Vagina (tissue), 2 donors: ENCODE measurements at regions of chr4 and their contacts with region 1.

Region 1: DNA sequence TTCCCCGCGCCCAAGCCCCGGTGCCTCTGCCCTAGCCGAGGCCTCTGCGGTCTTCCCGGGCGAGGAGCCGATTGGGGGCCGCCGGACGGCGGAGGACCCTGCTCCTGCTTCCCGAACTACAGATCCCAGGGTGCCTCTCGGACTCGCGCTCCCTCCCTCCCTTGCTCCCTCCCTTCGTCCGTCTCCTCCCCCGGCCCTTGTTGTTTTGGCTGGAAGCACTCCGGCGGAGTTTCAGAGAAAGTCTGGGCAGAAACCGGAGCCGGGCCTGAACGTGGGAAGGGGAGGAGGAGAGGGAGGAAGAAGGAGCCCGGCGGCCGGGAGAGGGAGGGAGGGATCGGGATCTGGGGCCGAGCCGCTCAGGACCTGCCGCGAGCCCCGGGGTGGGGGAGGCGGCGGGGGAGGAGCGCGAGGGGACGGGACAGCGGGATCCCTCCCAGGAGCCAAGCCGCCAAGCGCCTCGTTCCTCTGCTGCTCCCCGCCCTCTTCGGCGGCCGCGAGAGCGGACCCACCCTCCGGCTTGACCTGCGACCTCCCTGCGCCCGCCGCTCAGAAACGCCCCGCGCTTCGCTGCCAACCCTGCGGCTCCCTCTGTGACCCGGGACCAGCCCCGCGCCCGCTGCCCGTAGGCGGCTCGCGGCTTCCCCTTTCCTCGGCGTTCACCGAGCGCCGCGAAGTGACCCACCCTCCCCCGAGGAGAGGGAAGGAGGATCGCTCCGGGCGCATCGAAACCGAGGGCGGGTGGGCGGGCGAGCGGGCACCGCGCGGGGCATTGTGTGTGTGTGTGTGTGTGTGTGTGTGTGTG is 496 bp upstream of the GAB1 start:
- DNase-seq: peak in 1 of 2 donors; percentile 93
- H3K4me3 ChIP-seq: peak overlapping the region; percentile 78 to 83
- H3K27ac ChIP-seq: peak overlapping the region; percentile 94
- H3K4me1 ChIP-seq: peaks cover 26% of the 10 kb centered on the region
- H3K27me3 ChIP-seq: no peaks in the 10 kb centered on the region
- CTCF ChIP-seq: peak in 1 of 3 experiments; percentile 18
- POLR2A ChIP-seq: peak in 1 of 2 donors; percentile 0

Region 2: GRCh38 chr4:143207557-143207956 is 128.6 kb before region 1 on chr4:
- intact Hi-C with region 1: loop called (anchors 10 kb)
- DNase-seq: no peak
- H3K4me3 ChIP-seq: no peak overlapping the region
- H3K27ac ChIP-seq: no peak overlapping the region
- H3K4me1 ChIP-seq: no peaks in the 10 kb centered on the region
- H3K27me3 ChIP-seq: no peaks in the 10 kb centered on the region
- CTCF ChIP-seq: no peak
- POLR2A ChIP-seq: no peak

Region 3: GRCh38 chr4:143294310-143294709 is 41.9 kb before region 1 on chr4:
- intact Hi-C with region 1: loop called (anchors 5 kb)
- DNase-seq: no peak
- H3K4me3 ChIP-seq: no peak overlapping the region
- H3K27ac ChIP-seq: no peak overlapping the region
- H3K4me1 ChIP-seq: peaks cover 16% of the 10 kb centered on the region
- H3K27me3 ChIP-seq: no peaks in the 10 kb centered on the region
- CTCF ChIP-seq: no peak
- POLR2A ChIP-seq: no peak